CD8-positive, alpha-beta T cell (primary cell): ENCODE measurements at regions of chr12 and their contacts with region 1.

Region 1: DNA sequence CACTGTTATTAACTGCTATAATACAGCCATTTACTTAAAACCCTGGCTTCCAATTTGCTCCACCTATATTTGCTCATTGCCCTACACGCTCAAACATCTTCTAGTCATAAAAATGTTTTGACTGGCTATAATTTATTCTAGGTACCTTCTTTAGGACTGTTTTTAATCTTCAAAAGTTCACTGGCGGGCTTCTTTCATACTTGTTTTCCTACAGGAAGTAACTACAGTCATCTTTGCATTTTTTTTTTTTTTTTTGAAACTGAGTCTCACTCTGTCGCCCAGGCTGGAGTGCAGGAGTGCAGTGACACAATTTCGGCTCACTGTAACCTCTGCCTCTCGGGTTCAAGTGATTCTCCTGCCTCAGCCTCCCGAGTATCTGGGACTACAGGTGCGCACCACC is 32.5 kb downstream of the MPHOSPH9 start:
- DNase-seq: peak in 2 of 9 experiments; percentile 13 to 25
- ATAC-seq: peak; percentile 48
- H3K4me3 ChIP-seq: no peak overlapping the region
- H3K4me3 Mint-ChIP-seq: peak overlapping the region; percentile 2
- H3K27ac ChIP-seq: peak overlapping the region; percentile 12 to 36
- H3K27ac Mint-ChIP-seq: peak overlapping the region; percentile 84
- H3K4me1 ChIP-seq: peaks cover 9% of the 10 kb centered on the region
- H3K4me1 Mint-ChIP-seq: peaks cover 20% of the 10 kb centered on the region
- H3K27me3 ChIP-seq: no peaks in the 10 kb centered on the region
- H3K27me3 Mint-ChIP-seq: no peaks in the 10 kb centered on the region
- CTCF ChIP-seq: no peak

Region 2: GRCh38 chr12:123223241-123223668 is 22.8 kb after region 1 on chr12:
- CTCF ChIA-PET with region 1: no interaction called
- POLR2A ChIA-PET with region 1: interaction called, 13 read pairs
- intact Hi-C with region 1: no loop called
- DNase-seq: peak; percentile 21 to 90 (median 61)
- ATAC-seq: peak; percentile 90
- H3K4me3 ChIP-seq: peak overlapping the region; percentile 33 to 34
- H3K4me3 Mint-ChIP-seq: peak overlapping the region; percentile 74
- H3K27ac ChIP-seq: peak overlapping the region; percentile 70 to 74
- H3K27ac Mint-ChIP-seq: peak overlapping the region; percentile 93
- H3K4me1 ChIP-seq: peaks cover 35% of the 10 kb centered on the region
- H3K4me1 Mint-ChIP-seq: peaks cover 31% of the 10 kb centered on the region
- H3K27me3 ChIP-seq: no peaks in the 10 kb centered on the region
- H3K27me3 Mint-ChIP-seq: no peaks in the 10 kb centered on the region
- CTCF ChIP-seq: no peak